CD8-positive, alpha-beta T cell (primary cell): ENCODE measurements at regions of chr22 and their contacts with region 1.

Region 1: GRCh38 chr22:27880778-27881394 is 38.2 kb downstream of the PITPNB start:
- DNase-seq: peak in 3 of 9 experiments; percentile 17 to 61 (median 52)
- ATAC-seq: no peak
- H3K4me3 ChIP-seq: no peak overlapping the region
- H3K4me3 Mint-ChIP-seq: no peak overlapping the region
- H3K27ac ChIP-seq: no peak overlapping the region
- H3K27ac Mint-ChIP-seq: no peak overlapping the region
- H3K4me1 ChIP-seq: peaks cover 17% of the 10 kb centered on the region
- H3K4me1 Mint-ChIP-seq: peaks cover 21% of the 10 kb centered on the region
- H3K27me3 ChIP-seq: no peaks in the 10 kb centered on the region
- H3K27me3 Mint-ChIP-seq: no peaks in the 10 kb centered on the region
- CTCF ChIP-seq: peak; percentile 62

Region 2: DNA sequence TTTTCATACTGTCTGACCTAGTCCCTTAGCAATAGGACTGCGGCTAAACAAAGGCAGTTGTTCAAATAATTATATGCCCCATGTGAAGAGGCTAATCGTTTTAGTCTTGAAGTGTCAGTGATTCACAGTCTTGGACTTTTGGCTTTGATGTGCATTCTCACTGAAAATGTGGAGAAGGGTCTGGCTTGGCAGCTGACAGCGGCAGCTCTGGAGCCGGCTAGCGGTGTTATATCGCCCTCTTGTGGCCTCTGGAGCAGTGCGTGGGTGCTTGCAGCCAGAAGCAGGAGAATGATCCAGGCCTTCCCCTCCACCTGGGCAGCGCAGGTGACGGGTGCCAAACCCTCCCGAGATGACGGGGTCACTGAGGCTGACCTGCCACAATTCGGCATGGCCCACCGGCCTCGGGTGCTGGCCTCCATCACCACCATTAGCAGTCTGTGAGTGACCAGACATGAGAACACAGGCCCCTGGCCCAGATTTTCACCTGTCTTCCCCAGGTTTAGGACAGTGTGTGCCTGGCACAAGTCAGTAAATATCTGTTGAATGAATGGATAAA is 128.5 kb after region 1 on chr22:
- CTCF ChIA-PET with region 1: interaction called, 93 read pairs
- POLR2A ChIA-PET with region 1: no interaction called
- intact Hi-C with region 1: loop called (anchors 1 kb)
- DNase-seq: peak; percentile 46 to 81 (median 71)
- ATAC-seq: peak; percentile 71
- H3K4me3 ChIP-seq: no peak overlapping the region
- H3K4me3 Mint-ChIP-seq: no peak overlapping the region
- H3K27ac ChIP-seq: no peak overlapping the region
- H3K27ac Mint-ChIP-seq: no peak overlapping the region
- H3K4me1 ChIP-seq: no peaks in the 10 kb centered on the region
- H3K4me1 Mint-ChIP-seq: no peaks in the 10 kb centered on the region
- H3K27me3 ChIP-seq: no peaks in the 10 kb centered on the region
- H3K27me3 Mint-ChIP-seq: no peaks in the 10 kb centered on the region
- CTCF ChIP-seq: peak; percentile 92

Region 3: DNA sequence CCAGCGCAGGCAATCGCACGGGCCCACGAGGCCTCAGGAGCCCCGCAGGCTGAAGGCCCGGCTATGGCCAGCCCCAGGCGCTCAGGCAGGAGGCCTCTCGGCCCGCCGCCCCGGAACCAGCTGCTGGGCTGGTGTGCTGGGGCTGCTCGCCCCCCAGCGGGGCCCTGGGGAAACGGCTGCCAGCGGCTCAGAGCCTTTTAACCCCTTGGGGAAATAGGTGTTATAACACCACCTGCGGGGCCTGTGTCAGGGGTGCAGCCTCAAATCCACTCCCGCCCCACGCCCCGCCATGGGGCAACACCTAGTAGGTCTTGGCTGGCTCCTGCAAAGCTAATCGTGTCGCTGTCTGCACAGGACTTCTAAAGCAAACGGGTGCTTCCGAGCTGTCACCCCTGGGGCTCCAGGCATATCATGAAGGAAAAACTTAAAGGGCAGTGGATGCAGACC is 561.4 kb after region 1 on chr22:
- CTCF ChIA-PET with region 1: no interaction called
- POLR2A ChIA-PET with region 1: no interaction called
- intact Hi-C with region 1: loop called (anchors 5 kb)
- DNase-seq: peak; percentile 19 to 80 (median 59)
- ATAC-seq: peak; percentile 87
- H3K4me3 ChIP-seq: peak overlapping the region; percentile 63 to 66
- H3K4me3 Mint-ChIP-seq: peak overlapping the region; percentile 87
- H3K27ac ChIP-seq: peak overlapping the region in 1 of 2 experiments; percentile 0
- H3K27ac Mint-ChIP-seq: peak overlapping the region; percentile 72
- H3K4me1 ChIP-seq: peaks cover 13% of the 10 kb centered on the region
- H3K4me1 Mint-ChIP-seq: peaks cover 18% of the 10 kb centered on the region
- H3K27me3 ChIP-seq: no peaks in the 10 kb centered on the region
- H3K27me3 Mint-ChIP-seq: peaks cover 4% of the 10 kb centered on the region
- CTCF ChIP-seq: peak; percentile 56

Region 4: DNA sequence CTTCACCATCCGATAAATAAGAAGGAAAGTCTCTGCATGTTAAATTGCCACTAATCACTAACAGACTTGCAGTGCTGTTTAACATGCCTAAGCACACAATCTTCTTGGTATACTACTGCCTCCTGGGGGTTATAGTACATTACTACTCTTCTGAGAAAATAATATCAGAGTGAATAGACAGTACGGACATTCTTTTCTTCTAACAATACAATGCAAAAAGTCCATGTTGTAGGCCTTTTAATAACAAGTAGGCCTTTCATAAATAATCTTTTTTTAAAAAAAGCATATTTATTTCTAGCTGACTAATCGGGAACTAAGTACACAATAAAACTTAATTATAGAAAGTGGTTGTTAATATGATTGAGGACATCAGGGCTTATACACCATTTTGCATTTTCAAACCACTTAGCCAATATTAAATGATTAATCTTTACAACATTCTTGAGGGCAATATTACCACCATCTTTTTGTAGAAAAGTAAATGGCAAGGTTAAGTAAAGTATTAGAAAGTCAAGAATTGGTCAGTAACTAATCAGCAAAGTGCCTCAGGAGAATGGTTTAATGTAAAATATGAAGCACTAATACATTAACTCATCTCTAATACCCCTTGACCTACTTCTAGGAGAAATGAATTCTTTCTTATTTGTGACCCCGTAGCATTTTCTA is 714.0 kb after region 1 on chr22:
- CTCF ChIA-PET with region 1: interaction called, 3 read pairs
- POLR2A ChIA-PET with region 1: no interaction called
- intact Hi-C with region 1: loop called (anchors 2 to 10 kb)
- DNase-seq: peak in 2 of 9 experiments; percentile 38 to 56
- ATAC-seq: peak; percentile 76
- H3K4me3 ChIP-seq: no peak overlapping the region
- H3K4me3 Mint-ChIP-seq: no peak overlapping the region
- H3K27ac ChIP-seq: no peak overlapping the region
- H3K27ac Mint-ChIP-seq: no peak overlapping the region
- H3K4me1 ChIP-seq: no peaks in the 10 kb centered on the region
- H3K4me1 Mint-ChIP-seq: no peaks in the 10 kb centered on the region
- H3K27me3 ChIP-seq: no peaks in the 10 kb centered on the region
- H3K27me3 Mint-ChIP-seq: peaks cover 21% of the 10 kb centered on the region
- CTCF ChIP-seq: peak; percentile 79